HEK293 (cell line): ENCODE measurements at regions of chr11 and their contacts with region 1.

Region 1: GRCh38 chr11:46529095-46529905 is 64.5 kb downstream of the AMBRA1 start:
- H3K4me3 ChIP-seq: no peak overlapping the region
- H3K27ac ChIP-seq: no peak overlapping the region
- H3K4me1 ChIP-seq: no peaks in the 10 kb centered on the region
- CTCF ChIP-seq: peak; percentile 56; the same call in 1 of the 2 replicates

Region 2: GRCh38 chr11:46345131-46345597 is 184.1 kb before region 1 on chr11:
- CTCF ChIA-PET with region 1: no interaction called
- POLR2A ChIA-PET with region 1: no interaction called
- H3K4me3 ChIP-seq: no peak overlapping the region
- H3K27ac ChIP-seq: no peak overlapping the region
- H3K4me1 ChIP-seq: no peaks in the 10 kb centered on the region; the same call in 1 of the 2 replicates
- CTCF ChIP-seq: no peak

Region 3: GRCh38 chr11:46513934-46514342 is 15.4 kb before region 1 on chr11:
- CTCF ChIA-PET with region 1: interaction called, 14 read pairs
- POLR2A ChIA-PET with region 1: no interaction called
- H3K4me3 ChIP-seq: no peak overlapping the region
- H3K27ac ChIP-seq: no peak overlapping the region
- H3K4me1 ChIP-seq: no peaks in the 10 kb centered on the region
- CTCF ChIP-seq: no peak

Region 4: GRCh38 chr11:46547579-46547978 is 18.3 kb after region 1 on chr11:
- CTCF ChIA-PET with region 1: interaction called, 12 read pairs
- POLR2A ChIA-PET with region 1: no interaction called
- H3K4me3 ChIP-seq: no peak overlapping the region
- H3K27ac ChIP-seq: no peak overlapping the region
- H3K4me1 ChIP-seq: no peaks in the 10 kb centered on the region
- CTCF ChIP-seq: no peak